ENCODE measurements at regions of chr19 and their contacts with region 1.

Region 1: GRCh38 chr19:39341719-39342604 is at the start of gene SAMD4B:
- DNase-seq: peak; percentile 99
- ATAC-seq: peak; percentile 98
- total RNA-seq, gene SAMD4B: 40.6 TPM

Region 2: GRCh38 chr19:39372047-39372802 is 30.3 kb after region 1 on chr19:
- intact Hi-C with region 1: loop called (anchors 1 kb)
- DNase-seq: peak; percentile 84
- ATAC-seq: peak; percentile 95

Region 3: GRCh38 chr19:39390755-39391592 is 49.0 kb after region 1 on chr19 and contains the starts of genes MED29 and PAF1:
- intact Hi-C with region 1: loop called (anchors 5 kb)
- DNase-seq: peak; percentile 97
- ATAC-seq: peak; percentile 97
- total RNA-seq, gene MED29: 21.8 TPM
- total RNA-seq, gene PAF1: 34.5 TPM

Region 4: DNA sequence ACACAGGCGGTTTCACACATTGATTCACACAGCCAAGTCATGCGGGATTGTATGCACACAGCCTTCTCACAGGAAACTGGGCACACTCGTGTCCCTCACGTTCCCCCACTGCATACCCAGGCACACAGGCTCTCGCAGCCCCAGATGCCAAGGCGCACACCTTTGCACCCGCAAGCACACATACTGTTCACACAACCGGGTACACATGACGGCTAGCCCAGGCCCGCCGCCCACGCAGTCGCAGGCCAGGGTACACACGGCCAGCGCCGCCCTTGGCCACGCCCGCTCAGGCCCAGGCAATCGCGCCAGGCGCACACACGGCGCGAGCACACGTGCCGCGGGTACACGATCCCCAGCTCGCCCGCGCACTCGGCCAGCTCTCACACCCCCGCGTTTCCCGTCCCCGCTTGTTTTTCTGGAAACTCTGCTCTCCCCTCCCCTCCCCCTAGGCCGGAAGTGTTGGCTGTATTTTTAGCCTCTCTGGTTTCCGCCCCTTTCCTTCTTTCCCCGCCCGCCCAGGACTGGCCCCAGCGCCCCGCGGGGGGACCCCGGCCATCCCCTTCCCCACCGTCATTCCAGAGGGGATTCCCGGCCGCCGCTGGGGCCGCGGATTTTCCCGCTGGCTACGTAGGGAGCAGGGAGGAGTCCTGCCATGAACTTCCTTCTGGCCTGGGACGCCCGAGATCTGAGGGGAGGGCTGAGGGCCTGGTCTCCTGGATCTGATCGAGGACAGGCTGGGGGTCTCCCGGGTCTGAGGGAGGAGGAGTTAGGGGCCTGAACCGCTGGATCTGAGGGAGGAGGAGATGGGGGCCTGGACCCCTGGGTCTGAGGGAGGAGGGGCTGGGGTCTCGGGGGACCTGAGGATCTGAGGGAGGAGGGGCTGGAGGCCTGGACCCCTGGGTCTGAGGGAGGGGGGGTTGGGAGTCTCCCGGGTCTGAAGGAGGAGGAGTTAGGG is 60.7 kb after region 1 on chr19:
- intact Hi-C with region 1: no loop called
- DNase-seq: peak; percentile 97
- ATAC-seq: peak; percentile 53

Measured in Right ventricle myocardium inferior (tissue), 1 donor.